Caco-2 (cell line): ENCODE measurements at regions of chr2 and their contacts with region 1.

Region 1: GRCh38 chr2:215454519-215455246 is 18.8 kb upstream of the FN1 start:
- DNase-seq: peak in 1 of 2 experiments; percentile 52
- H3K4me3 ChIP-seq: no peak overlapping the region
- H3K4me3 Mint-ChIP-seq: no peak overlapping the region
- H3K27ac Mint-ChIP-seq: no peak overlapping the region
- H3K4me1 ChIP-seq: peaks cover 9% of the 10 kb centered on the region; the same call in 1 of the 2 replicates
- H3K4me1 Mint-ChIP-seq: peaks cover 7% of the 10 kb centered on the region
- H3K27me3 ChIP-seq: no peaks in the 10 kb centered on the region
- H3K27me3 Mint-ChIP-seq: no peaks in the 10 kb centered on the region
- CTCF ChIP-seq: peak; percentile 65 to 73

Region 2: DNA sequence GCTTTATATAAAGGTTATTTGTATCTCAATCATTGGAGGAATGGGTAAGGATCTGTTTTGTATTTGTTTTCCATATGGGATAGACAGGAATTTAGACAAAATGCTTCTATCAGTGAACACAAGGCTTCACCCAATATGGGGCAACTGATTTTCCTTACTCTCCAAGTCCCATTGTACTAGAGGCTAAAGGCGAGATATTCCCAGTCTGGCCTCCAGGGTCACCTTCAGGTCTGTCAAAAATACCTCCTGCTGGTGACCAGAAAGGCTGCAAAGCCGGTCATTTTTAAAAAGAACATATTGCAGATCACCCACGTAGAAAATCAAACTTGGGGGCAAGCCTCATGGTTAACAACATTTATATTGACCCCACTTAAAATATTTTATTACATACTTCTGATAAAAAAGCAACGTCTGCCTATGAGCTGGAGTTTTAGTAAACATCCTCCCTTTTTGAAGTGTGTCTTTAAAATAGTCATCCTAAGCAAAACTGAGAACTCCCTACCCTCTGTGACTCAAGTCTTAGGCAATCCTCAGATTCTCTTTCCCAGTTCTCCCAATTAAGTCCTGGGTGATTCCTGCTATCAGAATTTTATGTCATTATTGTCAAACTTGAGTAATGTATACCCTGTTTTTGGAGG is 282.1 kb after region 1 on chr2:
- CTCF ChIA-PET with region 1: no interaction called
- POLR2A ChIA-PET with region 1: no interaction called
- intact Hi-C with region 1: loop called (anchors 1 kb)
- DNase-seq: peak; percentile 57 to 62
- H3K4me3 ChIP-seq: no peak overlapping the region
- H3K4me3 Mint-ChIP-seq: no peak overlapping the region
- H3K27ac Mint-ChIP-seq: no peak overlapping the region
- H3K4me1 ChIP-seq: peaks cover 4% of the 10 kb centered on the region; the same call in 1 of the 2 replicates
- H3K4me1 Mint-ChIP-seq: peaks cover 7% of the 10 kb centered on the region
- H3K27me3 ChIP-seq: no peaks in the 10 kb centered on the region
- H3K27me3 Mint-ChIP-seq: no peaks in the 10 kb centered on the region
- CTCF ChIP-seq: peak; percentile 59 to 69

Region 3: GRCh38 chr2:215782965-215783364 is 328.3 kb after region 1 on chr2:
- CTCF ChIA-PET with region 1: interaction called, 3 read pairs
- POLR2A ChIA-PET with region 1: no interaction called
- intact Hi-C with region 1: loop called (anchors 2 kb)
- DNase-seq: no peak
- H3K4me3 ChIP-seq: no peak overlapping the region
- H3K4me3 Mint-ChIP-seq: no peak overlapping the region
- H3K27ac Mint-ChIP-seq: no peak overlapping the region
- H3K4me1 ChIP-seq: peaks cover 13% of the 10 kb centered on the region
- H3K4me1 Mint-ChIP-seq: peaks cover 7% of the 10 kb centered on the region
- H3K27me3 ChIP-seq: no peaks in the 10 kb centered on the region
- H3K27me3 Mint-ChIP-seq: no peaks in the 10 kb centered on the region
- CTCF ChIP-seq: no peak

Region 4: DNA sequence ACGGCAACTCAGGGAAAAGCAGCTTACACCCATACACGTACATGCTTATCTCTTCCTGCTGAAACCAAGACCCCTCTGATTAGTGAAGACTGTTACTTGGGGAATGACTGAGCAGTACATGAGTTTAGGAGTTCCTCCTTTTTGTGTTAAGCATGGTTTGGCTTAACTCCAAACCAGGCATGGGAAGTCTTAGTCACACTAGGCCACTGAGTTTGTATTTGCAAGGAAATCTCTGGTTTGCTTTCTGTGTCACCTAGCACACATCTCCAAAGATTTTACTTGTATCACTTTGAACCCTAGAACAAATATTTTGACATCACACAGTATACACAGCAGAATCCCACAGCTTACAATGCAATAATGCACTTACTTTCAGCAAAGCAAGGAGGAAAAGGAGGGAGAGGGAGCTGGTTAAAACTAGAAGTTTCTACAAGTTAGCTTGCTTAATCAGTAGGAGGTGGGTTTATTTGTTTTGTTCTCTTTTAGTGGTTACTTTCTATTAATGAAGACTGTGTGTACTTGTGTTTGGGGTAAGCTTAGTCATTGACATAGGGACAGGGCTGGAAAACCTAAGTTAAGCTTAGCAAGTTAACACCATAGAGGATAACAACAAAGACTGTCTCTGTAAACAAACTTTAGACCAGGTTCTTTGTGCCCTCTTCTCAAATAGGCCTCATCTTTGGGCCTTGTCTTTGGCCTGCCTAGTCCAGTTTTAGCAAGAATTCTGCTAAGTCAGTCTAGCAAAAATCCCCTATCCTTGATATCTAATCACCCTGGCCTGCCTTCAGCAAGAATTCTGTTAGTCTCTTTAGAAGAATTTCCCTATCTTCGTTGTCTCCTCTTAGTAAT is 339.3 kb after region 1 on chr2:
- CTCF ChIA-PET with region 1: no interaction called
- POLR2A ChIA-PET with region 1: no interaction called
- intact Hi-C with region 1: loop called (anchors 2 kb)
- DNase-seq: peak in 1 of 2 experiments; percentile 62
- H3K4me3 ChIP-seq: no peak overlapping the region
- H3K4me3 Mint-ChIP-seq: no peak overlapping the region
- H3K27ac Mint-ChIP-seq: peak overlapping the region; percentile 81
- H3K4me1 ChIP-seq: peaks cover 41% of the 10 kb centered on the region
- H3K4me1 Mint-ChIP-seq: peaks cover 48% of the 10 kb centered on the region
- H3K27me3 ChIP-seq: no peaks in the 10 kb centered on the region
- H3K27me3 Mint-ChIP-seq: no peaks in the 10 kb centered on the region
- CTCF ChIP-seq: no peak